Naive thymus-derived CD4-positive, alpha-beta T cell (primary cell): ENCODE measurements at regions of chr16 and their contacts with region 1.

Region 1: GRCh38 chr16:10332241-10332640 is 53.6 kb upstream of the ATF7IP2 start:
- DNase-seq: no peak
- ATAC-seq: no peak
- H3K4me3 ChIP-seq: no peak overlapping the region
- H3K4me3 Mint-ChIP-seq: peak overlapping the region in 3 of 10 donors; percentile 14 to 47 (median 32)
- H3K27ac ChIP-seq: no peak overlapping the region
- H3K27ac Mint-ChIP-seq: peak overlapping the region in 6 of 9 donors; percentile 31 to 67 (median 59)
- H3K4me1 ChIP-seq: peaks cover 18 to 43% of the 10 kb centered on the region in 2 donors
- H3K4me1 Mint-ChIP-seq: peaks cover 11 to 54% (median 48%) of the 10 kb centered on the region in 7 donors
- H3K27me3 ChIP-seq: no peaks in the 10 kb centered on the region
- H3K27me3 Mint-ChIP-seq: no peaks in the 10 kb centered on the region

Region 2: DNA sequence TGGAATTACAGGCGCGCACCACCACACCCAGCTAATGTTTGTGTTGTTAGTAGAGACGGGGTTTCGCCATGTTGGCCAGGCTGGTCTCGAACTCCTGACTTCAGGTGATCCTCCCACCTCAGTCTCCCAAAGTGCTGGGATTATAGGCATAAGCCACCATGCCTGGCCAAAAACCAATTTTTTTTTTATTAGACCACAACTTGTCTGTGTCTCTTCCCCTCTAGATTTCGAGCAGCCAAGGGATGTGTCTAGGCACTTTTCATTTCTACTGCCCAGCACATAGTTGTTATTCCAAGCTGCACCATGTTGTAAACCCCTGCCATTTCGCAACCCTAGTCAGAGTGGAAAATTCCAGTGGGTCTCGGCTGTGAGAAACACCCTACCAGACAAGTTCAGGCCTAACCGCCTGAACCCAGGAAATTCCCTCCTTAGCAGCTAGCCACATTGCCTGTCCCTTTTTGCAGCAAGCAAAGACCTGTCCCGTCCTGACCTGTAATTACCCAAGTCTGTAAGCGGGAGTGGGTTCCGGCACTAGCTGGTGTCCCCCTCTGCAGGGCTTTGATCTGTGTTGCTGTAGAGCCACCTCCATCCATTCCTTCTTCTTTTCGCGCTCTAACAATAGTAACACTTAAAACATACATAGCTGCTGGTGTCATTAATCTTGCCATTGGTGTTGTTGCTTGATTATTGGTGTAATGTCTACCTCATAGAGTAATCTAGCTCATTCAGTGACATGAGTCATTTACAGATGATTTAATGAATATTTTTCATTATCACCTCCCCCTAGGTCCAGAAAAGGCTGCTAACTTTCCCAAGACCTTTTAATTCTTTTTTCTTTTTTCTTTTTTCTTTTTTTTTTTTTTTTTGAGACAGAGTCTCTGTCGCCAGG is 23.7 kb before region 1 on chr16:
- CTCF ChIA-PET with region 1: no interaction called
- POLR2A ChIA-PET with region 1: interaction called, 10 read pairs
- intact Hi-C with region 1: no loop called
- DNase-seq: no peak
- ATAC-seq: no peak
- H3K4me3 ChIP-seq: no peak overlapping the region
- H3K4me3 Mint-ChIP-seq: no peak overlapping the region
- H3K27ac ChIP-seq: no peak overlapping the region
- H3K27ac Mint-ChIP-seq: no peak overlapping the region
- H3K4me1 ChIP-seq: no peaks in the 10 kb centered on the region
- H3K4me1 Mint-ChIP-seq: peaks cover 0 to 6% (median 0%) of the 10 kb centered on the region in 7 donors
- H3K27me3 ChIP-seq: no peaks in the 10 kb centered on the region
- H3K27me3 Mint-ChIP-seq: peaks cover 0 to 2% (median 0%) of the 10 kb centered on the region in 5 donors

Region 3: DNA sequence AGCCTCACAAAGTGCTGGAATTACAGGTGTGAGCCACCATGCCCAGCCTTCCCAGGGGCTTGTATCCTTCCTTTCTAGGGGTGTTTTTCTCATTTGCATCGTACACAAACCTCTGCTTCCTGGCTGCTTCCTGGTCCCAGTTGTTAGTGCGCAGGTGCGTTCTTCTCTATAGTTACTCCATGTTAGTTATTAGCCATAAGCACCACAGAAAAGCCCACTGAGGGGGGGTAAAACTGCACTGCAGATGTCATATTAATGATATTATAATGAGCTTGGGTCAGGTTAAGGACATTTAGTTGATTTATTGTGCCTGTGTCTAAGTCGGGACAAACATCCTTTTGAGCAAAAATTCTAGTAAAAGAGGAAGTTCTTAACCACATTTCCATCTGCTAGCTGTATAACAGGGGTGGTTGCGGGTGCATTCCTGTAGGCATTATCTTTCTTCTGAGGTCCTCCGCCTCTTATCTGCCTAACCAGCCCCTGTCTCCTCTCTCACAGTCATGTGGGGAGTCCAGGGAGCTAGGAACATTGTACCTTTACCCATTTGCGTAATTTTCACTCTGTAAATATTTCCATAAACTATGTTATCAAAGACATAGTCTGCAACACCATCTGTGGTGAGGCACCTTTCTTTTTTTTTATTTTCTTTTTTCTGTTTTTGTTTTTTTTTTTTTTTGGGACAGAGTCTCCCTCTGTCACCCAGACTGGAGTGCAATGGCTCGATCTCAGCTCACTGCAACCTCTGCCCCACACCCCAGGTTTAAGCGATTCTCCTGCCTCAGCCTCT is 30.0 kb after region 1 on chr16:
- CTCF ChIA-PET with region 1: no interaction called
- POLR2A ChIA-PET with region 1: interaction called, 4 read pairs
- intact Hi-C with region 1: loop called (anchors 2 to 5 kb)
- DNase-seq: peak in 6 of 9 donors; percentile 21 to 50 (median 37)
- ATAC-seq: peak; percentile 51
- H3K4me3 ChIP-seq: no peak overlapping the region
- H3K4me3 Mint-ChIP-seq: peak overlapping the region; percentile 50 to 84 (median 71)
- H3K27ac ChIP-seq: no peak overlapping the region
- H3K27ac Mint-ChIP-seq: peak overlapping the region; percentile 76 to 94 (median 85)
- H3K4me1 ChIP-seq: peaks cover 0 to 16% of the 10 kb centered on the region in 2 donors
- H3K4me1 Mint-ChIP-seq: peaks cover 8 to 39% (median 27%) of the 10 kb centered on the region in 7 donors
- H3K27me3 ChIP-seq: no peaks in the 10 kb centered on the region
- H3K27me3 Mint-ChIP-seq: peaks cover 0 to 5% (median 0%) of the 10 kb centered on the region in 5 donors

Region 4: GRCh38 chr16:10428433-10429168 is 96.4 kb after region 1 on chr16:
- CTCF ChIA-PET with region 1: no interaction called
- POLR2A ChIA-PET with region 1: no interaction called
- intact Hi-C with region 1: no loop called
- DNase-seq: no peak
- ATAC-seq: no peak
- H3K4me3 ChIP-seq: no peak overlapping the region
- H3K4me3 Mint-ChIP-seq: no peak overlapping the region
- H3K27ac ChIP-seq: no peak overlapping the region
- H3K27ac Mint-ChIP-seq: peak overlapping the region in 2 of 9 donors; percentile 39 to 47
- H3K4me1 ChIP-seq: no peaks in the 10 kb centered on the region
- H3K4me1 Mint-ChIP-seq: peaks cover 0 to 7% (median 0%) of the 10 kb centered on the region in 7 donors
- H3K27me3 ChIP-seq: no peaks in the 10 kb centered on the region
- H3K27me3 Mint-ChIP-seq: no peaks in the 10 kb centered on the region

Region 5: DNA sequence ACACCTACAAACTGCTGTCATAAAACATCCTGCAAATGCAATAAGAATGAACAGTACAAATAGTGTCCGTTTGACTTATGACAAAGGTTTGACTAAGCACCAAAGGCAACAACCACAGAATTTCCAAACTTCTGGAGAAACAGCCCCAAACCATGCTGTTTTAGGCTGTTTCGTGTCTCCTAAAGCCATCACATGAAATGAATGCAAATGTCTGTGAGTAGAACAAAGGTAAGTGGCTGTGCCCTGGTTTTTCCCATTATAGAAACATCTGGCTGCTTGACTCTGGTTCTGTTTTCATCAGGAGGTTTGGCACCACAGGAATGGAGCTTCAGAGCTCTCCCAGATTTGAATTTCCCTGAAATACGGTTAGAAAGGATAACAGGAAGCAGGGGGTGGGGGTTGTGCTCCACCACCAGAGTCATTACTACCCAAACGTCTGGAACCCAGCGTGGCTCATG is 252.8 kb after region 1 on chr16:
- CTCF ChIA-PET with region 1: no interaction called
- POLR2A ChIA-PET with region 1: no interaction called
- intact Hi-C with region 1: no loop called
- DNase-seq: no peak
- ATAC-seq: no peak
- H3K4me3 ChIP-seq: no peak overlapping the region
- H3K4me3 Mint-ChIP-seq: no peak overlapping the region
- H3K27ac ChIP-seq: no peak overlapping the region
- H3K27ac Mint-ChIP-seq: no peak overlapping the region
- H3K4me1 ChIP-seq: no peaks in the 10 kb centered on the region
- H3K4me1 Mint-ChIP-seq: peaks cover 0 to 7% (median 0%) of the 10 kb centered on the region in 7 donors
- H3K27me3 ChIP-seq: no peaks in the 10 kb centered on the region
- H3K27me3 Mint-ChIP-seq: peaks cover 29 to 59% (median 42%) of the 10 kb centered on the region in 5 donors